ENCODE measurements at regions of chr4 and their contacts with region 1.

Region 1: GRCh38 chr4:42371306-42372252 is 25.7 kb upstream of the SHISA3 start:
- DNase-seq: peak; percentile 54 to 77 (median 72)
- H3K4me3 ChIP-seq: no peak overlapping the region
- H3K27ac ChIP-seq: no peak overlapping the region
- H3K4me1 ChIP-seq: no peaks in the 10 kb centered on the region
- H3K27me3 ChIP-seq: peaks cover 0 to 4% (median 0%) of the 10 kb centered on the region in 5 experiments

Region 2: GRCh38 chr4:42513748-42514492 is 142.3 kb after region 1 on chr4:
- CTCF ChIA-PET with region 1: interaction called, 62 read pairs
- POLR2A ChIA-PET with region 1: no interaction called
- DNase-seq: no peak
- H3K4me3 ChIP-seq: no peak overlapping the region
- H3K27ac ChIP-seq: no peak overlapping the region
- H3K4me1 ChIP-seq: peaks cover 0 to 2% (median 0%) of the 10 kb centered on the region in 4 experiments
- H3K27me3 ChIP-seq: no peaks in the 10 kb centered on the region

Region 3: GRCh38 chr4:42519803-42520417 is 148.3 kb after region 1 on chr4:
- CTCF ChIA-PET with region 1: interaction called, 62 read pairs
- POLR2A ChIA-PET with region 1: no interaction called
- DNase-seq: peak; percentile 42 to 73 (median 60)
- H3K4me3 ChIP-seq: no peak overlapping the region
- H3K27ac ChIP-seq: no peak overlapping the region
- H3K4me1 ChIP-seq: peaks cover 0 to 2% (median 0%) of the 10 kb centered on the region in 4 experiments
- H3K27me3 ChIP-seq: no peaks in the 10 kb centered on the region

Measured in common myeloid progenitor, CD34-positive (primary cell).